ENCODE measurements at regions of chr1 and their contacts with region 1.

Region 1: GRCh38 chr1:145891587-145892485 is 6.2 kb upstream of the ANKRD35 start:
- DNase-seq: peak; percentile 98 to 99
- ATAC-seq: peak; percentile 97
- H3K4me3 ChIP-seq: no peak overlapping the region
- H3K27ac ChIP-seq: peak overlapping the region; percentile 88 to 91
- H3K4me1 ChIP-seq: peaks cover 41% of the 10 kb centered on the region
- CTCF ChIP-seq: peak; percentile 98
- EP300 ChIP-seq: no peak
- POLR2A ChIP-seq: no peak
- RAD21 ChIP-seq: peak; percentile 96 to 98

Region 2: GRCh38 chr1:145871994-145872924 is 19.6 kb before region 1 on chr1:
- CTCF ChIA-PET with region 1: interaction called, 18 read pairs
- POLR2A ChIA-PET with region 1: no interaction called
- DNase-seq: no peak
- ATAC-seq: peak in 1 of 2 experiments; percentile 22; a peak in 2 of 6 replicates
- H3K4me3 ChIP-seq: no peak overlapping the region
- H3K27ac ChIP-seq: no peak overlapping the region
- H3K4me1 ChIP-seq: no peaks in the 10 kb centered on the region
- CTCF ChIP-seq: no peak
- EP300 ChIP-seq: no peak
- POLR2A ChIP-seq: no peak
- RAD21 ChIP-seq: no peak

Region 3: GRCh38 chr1:145918144-145918992 is 26.5 kb after region 1 on chr1 and contains the start of gene PEX11B:
- CTCF ChIA-PET with region 1: interaction called, 429 read pairs
- POLR2A ChIA-PET with region 1: interaction called, 14 read pairs
- DNase-seq: peak; percentile 87 to 89
- ATAC-seq: peak; percentile 89 to 95
- H3K4me3 ChIP-seq: peak within 1 kb of the TSS; percentile 85
- H3K27ac ChIP-seq: peak within 1 kb of the TSS; percentile 85 to 92
- H3K4me1 ChIP-seq: peaks cover 10% of the 10 kb centered on the region
- CTCF ChIP-seq: no peak
- EP300 ChIP-seq: no peak
- POLR2A ChIP-seq: peak; percentile 45
- RAD21 ChIP-seq: no peak
- polyA plus RNA-seq, gene PEX11B: 35.5 and 40.6 TPM in 2 replicates

Region 4: GRCh38 chr1:145957443-145958319 is 65.8 kb after region 1 on chr1 and contains the start of gene LIX1L:
- CTCF ChIA-PET with region 1: interaction called, 11 read pairs
- POLR2A ChIA-PET with region 1: interaction called, 14 read pairs
- DNase-seq: peak; percentile 95 to 97
- ATAC-seq: peak; percentile 82 to 89
- H3K4me3 ChIP-seq: peak within 1 kb of the TSS; percentile 68
- H3K27ac ChIP-seq: peak within 1 kb of the TSS; percentile 91 to 97
- H3K4me1 ChIP-seq: peaks cover 42% of the 10 kb centered on the region
- CTCF ChIP-seq: no peak
- EP300 ChIP-seq: no peak
- POLR2A ChIP-seq: peak; percentile 66
- RAD21 ChIP-seq: no peak
- polyA plus RNA-seq, gene LIX1L: 33.0 and 35.8 TPM in 2 replicates

Region 5: GRCh38 chr1:146012737-146013403 is 121.0 kb after region 1 on chr1:
- CTCF ChIA-PET with region 1: interaction called, 50 read pairs
- POLR2A ChIA-PET with region 1: no interaction called
- DNase-seq: peak; percentile 69 to 82
- ATAC-seq: peak; percentile 70 to 83; a peak in 5 of 6 replicates
- H3K4me3 ChIP-seq: no peak overlapping the region
- H3K27ac ChIP-seq: no peak overlapping the region
- H3K4me1 ChIP-seq: peaks cover 3% of the 10 kb centered on the region; the same call in 1 of the 3 replicates
- CTCF ChIP-seq: peak; percentile 96
- EP300 ChIP-seq: no peak
- POLR2A ChIP-seq: no peak
- RAD21 ChIP-seq: peak; percentile 93 to 96